ENCODE measurements at regions of chr1 and their contacts with region 1.

Region 1: GRCh38 chr1:100459358-100460114 is 78.4 kb upstream of the GPR88 start:
- DNase-seq: peak; percentile 62
- H3K4me3 ChIP-seq: no peak overlapping the region
- H3K27ac ChIP-seq: no peak overlapping the region
- H3K4me1 ChIP-seq: peaks cover 0 to 9% of the 10 kb centered on the region in 2 experiments; a peak in 2 of 4 replicates
- H3K27me3 ChIP-seq: no peaks in the 10 kb centered on the region
- CTCF ChIP-seq: peak; percentile 91
- EP300 ChIP-seq: no peak
- RAD21 ChIP-seq: peak; percentile 97

Region 2: DNA sequence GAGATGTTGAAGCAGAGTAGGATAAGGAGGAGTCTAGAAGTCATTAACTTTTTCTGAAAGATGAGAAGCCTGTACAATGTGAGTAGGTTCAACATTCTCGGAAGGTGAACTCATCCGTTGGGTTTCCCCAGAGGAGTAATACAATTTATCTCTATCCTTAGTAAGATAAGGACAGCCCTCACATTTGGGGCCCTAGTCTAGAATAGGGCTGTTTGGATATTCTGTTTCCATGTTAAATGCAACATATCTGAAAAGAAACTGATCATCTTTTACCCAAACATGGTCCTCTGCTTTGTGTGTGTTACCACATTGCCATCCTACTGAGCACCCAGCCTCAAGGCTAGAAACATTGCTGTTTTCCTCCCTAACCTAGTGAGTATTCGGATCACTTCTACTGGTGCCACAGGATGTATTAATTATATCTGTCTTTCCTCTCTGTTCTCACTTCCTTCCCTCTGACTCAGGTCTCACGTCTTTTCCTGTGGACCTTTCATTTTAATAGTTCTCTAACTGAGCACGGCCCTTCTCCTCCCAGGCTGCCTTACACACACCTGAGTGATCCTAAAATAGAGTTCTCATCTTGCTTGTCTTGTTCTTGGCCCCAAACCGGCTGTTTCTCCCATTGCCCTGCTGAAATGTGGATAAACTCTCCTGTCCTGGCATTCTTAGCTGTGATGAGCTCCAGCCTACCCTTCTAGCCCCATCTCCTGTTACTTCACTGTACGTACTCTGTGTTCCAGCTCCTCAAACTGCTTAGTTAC is 15.5 kb before region 1 on chr1:
- CTCF ChIA-PET with region 1: interaction called, 20 read pairs
- POLR2A ChIA-PET with region 1: no interaction called
- DNase-seq: no peak
- H3K4me3 ChIP-seq: no peak overlapping the region
- H3K27ac ChIP-seq: no peak overlapping the region
- H3K4me1 ChIP-seq: peaks cover 3 to 6% of the 10 kb centered on the region in 2 experiments; a peak in 3 of 4 replicates
- H3K27me3 ChIP-seq: no peaks in the 10 kb centered on the region
- CTCF ChIP-seq: no peak
- EP300 ChIP-seq: no peak
- RAD21 ChIP-seq: no peak

Region 3: GRCh38 chr1:100469578-100469977 is 10.0 kb after region 1 on chr1:
- CTCF ChIA-PET with region 1: interaction called, 20 read pairs
- POLR2A ChIA-PET with region 1: no interaction called
- DNase-seq: no peak
- H3K4me3 ChIP-seq: no peak overlapping the region
- H3K27ac ChIP-seq: no peak overlapping the region
- H3K4me1 ChIP-seq: no peaks in the 10 kb centered on the region; a peak in 1 of 4 replicates
- H3K27me3 ChIP-seq: no peaks in the 10 kb centered on the region
- CTCF ChIP-seq: no peak
- EP300 ChIP-seq: no peak
- RAD21 ChIP-seq: no peak

Region 4: GRCh38 chr1:100474834-100475233 is 15.3 kb after region 1 on chr1:
- CTCF ChIA-PET with region 1: interaction called, 20 read pairs
- POLR2A ChIA-PET with region 1: no interaction called
- DNase-seq: no peak
- H3K4me3 ChIP-seq: no peak overlapping the region
- H3K27ac ChIP-seq: no peak overlapping the region
- H3K4me1 ChIP-seq: no peaks in the 10 kb centered on the region
- H3K27me3 ChIP-seq: no peaks in the 10 kb centered on the region
- CTCF ChIP-seq: no peak
- EP300 ChIP-seq: no peak
- RAD21 ChIP-seq: no peak

Region 5: GRCh38 chr1:100482167-100482566 is 22.6 kb after region 1 on chr1:
- CTCF ChIA-PET with region 1: interaction called, 20 read pairs
- POLR2A ChIA-PET with region 1: no interaction called
- DNase-seq: no peak
- H3K4me3 ChIP-seq: no peak overlapping the region
- H3K27ac ChIP-seq: peak overlapping the region; percentile 0 to 51; a peak in 2 of 4 replicates
- H3K4me1 ChIP-seq: peaks cover 0 to 7% of the 10 kb centered on the region in 2 experiments; a peak in 1 of 4 replicates
- H3K27me3 ChIP-seq: no peaks in the 10 kb centered on the region
- CTCF ChIP-seq: no peak
- EP300 ChIP-seq: no peak
- RAD21 ChIP-seq: no peak

Region 6: DNA sequence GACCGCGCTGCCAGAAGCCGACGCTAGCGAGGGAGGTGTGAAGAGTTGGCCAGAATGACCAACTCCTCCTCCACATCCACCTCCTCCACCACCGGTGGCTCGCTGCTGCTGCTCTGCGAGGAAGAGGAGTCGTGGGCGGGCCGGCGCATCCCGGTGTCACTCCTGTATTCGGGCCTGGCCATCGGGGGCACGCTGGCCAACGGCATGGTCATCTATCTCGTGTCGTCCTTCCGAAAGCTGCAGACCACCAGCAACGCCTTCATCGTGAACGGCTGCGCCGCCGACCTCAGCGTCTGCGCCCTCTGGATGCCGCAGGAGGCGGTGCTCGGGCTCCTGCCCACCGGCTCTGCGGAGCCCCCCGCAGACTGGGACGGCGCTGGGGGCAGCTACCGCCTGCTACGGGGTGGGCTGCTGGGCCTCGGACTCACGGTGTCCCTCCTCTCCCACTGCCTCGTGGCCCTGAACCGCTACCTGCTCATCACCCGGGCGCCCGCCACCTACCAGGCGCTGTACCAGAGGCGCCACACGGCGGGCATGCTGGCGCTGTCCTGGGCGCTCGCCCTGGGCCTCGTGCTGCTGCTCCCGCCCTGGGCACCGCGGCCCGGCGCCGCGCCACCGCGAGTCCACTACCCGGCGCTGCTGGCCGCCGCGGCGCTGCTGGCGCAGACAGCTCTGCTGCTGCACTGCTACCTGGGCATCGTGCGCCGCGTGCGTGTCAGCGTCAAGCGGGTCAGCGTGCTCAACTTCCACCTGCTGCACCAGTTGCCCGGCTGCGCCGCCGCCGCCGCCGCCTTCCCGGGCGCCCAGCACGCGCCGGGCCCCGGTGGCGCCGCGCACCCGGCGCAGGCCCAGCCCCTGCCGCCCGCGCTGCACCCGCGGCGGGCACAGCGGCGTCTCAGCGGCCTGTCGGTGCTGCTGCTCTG is 79.6 kb after region 1 on chr1:
- CTCF ChIA-PET with region 1: interaction called, 13 read pairs
- POLR2A ChIA-PET with region 1: no interaction called
- DNase-seq: peak; percentile 77
- H3K4me3 ChIP-seq: peak overlapping the region; percentile 36 to 60
- H3K27ac ChIP-seq: no peak overlapping the region
- H3K4me1 ChIP-seq: peaks cover 0 to 26% of the 10 kb centered on the region in 2 experiments; a peak in 2 of 4 replicates
- H3K27me3 ChIP-seq: no peaks in the 10 kb centered on the region
- CTCF ChIP-seq: peak; percentile 28
- EP300 ChIP-seq: no peak
- RAD21 ChIP-seq: no peak

Region 7: GRCh38 chr1:100883963-100884362 is 424.4 kb after region 1 on chr1:
- CTCF ChIA-PET with region 1: interaction called, 12 read pairs
- POLR2A ChIA-PET with region 1: no interaction called
- DNase-seq: no peak
- H3K4me3 ChIP-seq: no peak overlapping the region
- H3K27ac ChIP-seq: peak overlapping the region in 1 of 2 experiments; percentile 2; a peak in 1 of 4 replicates
- H3K4me1 ChIP-seq: no peaks in the 10 kb centered on the region; a peak in 2 of 4 replicates
- H3K27me3 ChIP-seq: no peaks in the 10 kb centered on the region
- CTCF ChIP-seq: peak; percentile 32
- EP300 ChIP-seq: no peak
- RAD21 ChIP-seq: no peak